PC-9 (cell line): ENCODE measurements at regions of chr9 and their contacts with region 1.

Region 1: DNA sequence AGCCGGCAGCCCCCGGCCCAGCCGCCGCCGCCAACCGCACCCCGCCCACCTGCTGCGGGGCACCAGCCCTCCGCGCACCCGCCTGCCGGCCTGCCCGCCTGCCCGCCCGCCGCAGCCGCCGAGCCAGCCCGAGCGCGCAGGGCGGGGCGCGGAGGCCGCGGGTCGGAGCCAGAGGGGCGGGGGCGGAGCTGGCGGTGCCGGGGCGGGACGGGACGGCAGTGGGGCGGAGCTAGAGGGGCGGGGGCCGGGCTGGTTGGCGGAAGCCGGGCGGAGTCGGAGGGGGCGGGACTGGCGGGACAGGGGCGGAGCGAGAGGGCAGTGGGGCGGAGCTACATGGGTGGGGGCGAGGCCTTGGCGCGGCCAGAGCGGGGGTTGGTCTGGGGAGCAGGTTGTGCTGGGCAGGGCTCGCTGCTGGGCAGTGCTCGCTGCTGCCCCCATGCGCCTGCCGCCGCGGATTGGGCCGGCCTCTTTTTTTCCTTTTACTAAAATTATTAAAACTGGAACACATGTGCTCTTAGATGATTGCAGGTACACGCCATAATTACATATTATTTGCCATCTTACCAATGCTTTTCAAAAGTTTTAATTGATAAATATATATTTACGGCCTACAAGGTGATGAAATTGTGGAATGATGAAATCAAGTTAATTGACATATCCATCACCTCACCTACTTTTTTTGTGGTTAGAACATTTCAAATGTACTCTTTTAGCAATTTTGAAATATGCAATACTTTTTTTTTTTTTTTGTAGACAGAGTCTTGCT is at the start of gene SH3GLB2:
- DNase-seq: peak; percentile 73 to 98
- H3K4me3 ChIP-seq: peak within 1 kb of the TSS; percentile 63
- H3K27ac ChIP-seq: peak within 1 kb of the TSS; percentile 48
- H3K4me1 ChIP-seq: peaks cover 47% of the 10 kb centered on the region
- H3K27me3 ChIP-seq: no peaks in the 10 kb centered on the region
- CTCF ChIP-seq: peak; percentile 86
- total RNA-seq, gene SH3GLB2: 184 and 213 TPM in 2 replicates

Region 2: GRCh38 chr9:128688512-128689292 is 339.7 kb before region 1 on chr9 and contains the start of gene SET:
- CTCF ChIA-PET with region 1: no interaction called
- POLR2A ChIA-PET with region 1: interaction called, 4 read pairs
- intact Hi-C with region 1: loop called (anchors 10 kb)
- DNase-seq: peak; percentile 71 to 98
- H3K4me3 ChIP-seq: peak within 1 kb of the TSS; percentile 80
- H3K27ac ChIP-seq: peak within 1 kb of the TSS; percentile 78
- H3K4me1 ChIP-seq: peaks cover 47% of the 10 kb centered on the region
- H3K27me3 ChIP-seq: no peaks in the 10 kb centered on the region
- CTCF ChIP-seq: no peak
- total RNA-seq, gene SET: 539 and 738 TPM in 2 replicates

Region 3: DNA sequence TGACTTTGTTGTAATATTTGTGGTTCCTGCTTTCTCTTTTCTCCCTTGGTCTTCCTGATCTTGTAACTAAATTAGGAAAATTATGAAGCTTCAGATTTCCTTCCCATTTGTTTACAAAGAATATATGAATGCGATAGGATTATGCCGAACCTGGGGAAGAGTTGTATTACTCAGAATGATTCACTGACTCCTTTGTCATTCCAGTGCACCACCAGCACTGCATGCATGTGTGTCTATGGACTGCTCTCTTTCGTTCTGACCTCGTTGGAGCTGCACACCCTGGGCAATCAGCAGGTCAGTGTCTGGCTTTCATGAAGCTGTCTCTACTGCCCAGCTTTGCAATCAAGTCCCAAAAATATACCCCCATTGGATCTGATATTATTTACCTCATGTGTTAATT is 55.4 kb before region 1 on chr9:
- CTCF ChIA-PET with region 1: no interaction called
- POLR2A ChIA-PET with region 1: interaction called, 13 read pairs
- intact Hi-C with region 1: no loop called
- DNase-seq: peak in 1 of 2 experiments; percentile 8
- H3K4me3 ChIP-seq: no peak overlapping the region
- H3K27ac ChIP-seq: 0 out of 2 replicates have a peak overlapping the region, but pooled peaks have one; percentile 18
- H3K4me1 ChIP-seq: no peaks in the 10 kb centered on the region
- H3K27me3 ChIP-seq: no peaks in the 10 kb centered on the region
- CTCF ChIP-seq: no peak

Region 4: DNA sequence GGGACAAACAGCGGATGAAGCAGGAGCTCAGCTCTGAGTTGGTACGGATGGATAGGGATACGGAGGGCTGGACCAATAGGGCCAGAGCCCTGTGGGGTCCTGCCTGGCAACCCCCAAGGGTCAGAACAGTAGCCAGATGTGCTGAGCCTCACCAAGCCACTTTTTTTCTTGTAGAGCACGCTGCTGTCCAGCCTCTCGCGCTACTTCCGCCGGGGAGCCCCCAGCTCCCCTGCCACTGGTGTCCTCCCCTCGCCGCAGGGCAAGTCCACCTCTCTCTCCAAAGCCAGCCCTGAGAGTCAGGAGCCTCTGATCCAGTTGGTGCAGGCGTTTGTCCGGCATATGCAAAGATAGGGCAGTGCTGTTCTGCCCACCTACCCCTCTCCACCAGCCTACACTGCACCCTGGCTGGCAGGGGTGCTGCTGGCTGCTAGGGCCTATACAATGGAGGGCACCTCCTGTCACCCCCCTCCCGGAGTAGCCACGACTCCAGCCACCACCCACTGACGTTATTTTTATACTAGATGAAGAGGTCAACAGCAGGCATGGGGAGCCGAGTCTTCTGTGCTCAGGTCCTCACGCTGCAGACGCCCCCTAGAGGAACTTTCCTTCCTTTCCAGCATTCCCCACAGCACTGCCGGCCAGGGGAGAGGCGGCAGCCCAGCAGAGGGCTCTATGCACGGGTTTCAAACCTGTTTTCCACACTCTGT is 21.9 kb before region 1 on chr9:
- CTCF ChIA-PET with region 1: interaction called, 8 read pairs
- POLR2A ChIA-PET with region 1: no interaction called
- intact Hi-C with region 1: loop called (anchors 1 kb)
- DNase-seq: peak; percentile 58 to 77
- H3K4me3 ChIP-seq: no peak overlapping the region
- H3K27ac ChIP-seq: no peak overlapping the region
- H3K4me1 ChIP-seq: no peaks in the 10 kb centered on the region
- H3K27me3 ChIP-seq: no peaks in the 10 kb centered on the region
- CTCF ChIP-seq: peak; percentile 85

Region 5: DNA sequence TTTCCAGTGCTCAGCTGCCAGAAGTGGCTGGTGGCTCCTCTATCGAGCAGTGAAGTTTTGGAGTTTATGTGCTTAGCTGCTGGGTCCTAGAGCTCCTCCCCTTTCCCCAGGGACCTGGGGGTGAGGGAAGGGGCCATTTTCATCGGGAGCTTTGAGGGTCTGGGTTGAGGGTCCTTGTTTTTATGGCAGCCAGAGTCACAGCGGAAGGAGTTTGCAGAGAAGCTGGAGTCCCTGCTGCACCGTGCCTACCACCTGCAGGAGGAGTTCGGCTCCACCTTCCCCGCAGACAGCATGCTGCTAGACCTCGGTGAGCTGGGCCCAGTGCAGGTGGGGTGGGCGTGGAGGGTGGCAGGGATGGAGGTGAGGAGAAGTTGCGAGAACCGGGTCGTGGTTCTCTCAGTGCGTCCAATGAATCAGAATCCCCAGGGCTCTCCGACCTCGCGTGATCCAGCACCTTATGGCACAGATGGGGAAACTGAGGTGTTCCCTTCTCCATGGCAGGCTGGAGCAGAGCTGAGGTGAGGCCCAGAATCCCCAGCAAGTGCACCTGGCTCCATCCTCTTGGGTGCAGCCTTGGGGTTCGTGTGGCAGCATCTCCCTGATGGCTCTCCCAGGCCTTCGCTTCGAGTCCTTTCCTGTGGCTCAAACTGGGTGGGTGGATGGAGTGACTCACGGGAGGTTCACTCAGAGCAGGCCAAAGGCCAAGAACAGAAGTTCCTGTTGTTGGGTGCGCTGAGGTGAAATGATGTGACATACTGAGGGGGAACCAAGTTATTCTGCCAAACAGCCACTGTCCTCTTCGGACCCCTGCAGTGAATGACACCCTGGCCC is 30.8 kb after region 1 on chr9:
- CTCF ChIA-PET with region 1: no interaction called
- POLR2A ChIA-PET with region 1: no interaction called
- intact Hi-C with region 1: loop called (anchors 1 kb)
- DNase-seq: peak; percentile 51 to 76
- H3K4me3 ChIP-seq: no peak overlapping the region
- H3K27ac ChIP-seq: peak overlapping the region; percentile 43
- H3K4me1 ChIP-seq: peaks cover 33% of the 10 kb centered on the region
- H3K27me3 ChIP-seq: no peaks in the 10 kb centered on the region
- CTCF ChIP-seq: no peak

Region 6: DNA sequence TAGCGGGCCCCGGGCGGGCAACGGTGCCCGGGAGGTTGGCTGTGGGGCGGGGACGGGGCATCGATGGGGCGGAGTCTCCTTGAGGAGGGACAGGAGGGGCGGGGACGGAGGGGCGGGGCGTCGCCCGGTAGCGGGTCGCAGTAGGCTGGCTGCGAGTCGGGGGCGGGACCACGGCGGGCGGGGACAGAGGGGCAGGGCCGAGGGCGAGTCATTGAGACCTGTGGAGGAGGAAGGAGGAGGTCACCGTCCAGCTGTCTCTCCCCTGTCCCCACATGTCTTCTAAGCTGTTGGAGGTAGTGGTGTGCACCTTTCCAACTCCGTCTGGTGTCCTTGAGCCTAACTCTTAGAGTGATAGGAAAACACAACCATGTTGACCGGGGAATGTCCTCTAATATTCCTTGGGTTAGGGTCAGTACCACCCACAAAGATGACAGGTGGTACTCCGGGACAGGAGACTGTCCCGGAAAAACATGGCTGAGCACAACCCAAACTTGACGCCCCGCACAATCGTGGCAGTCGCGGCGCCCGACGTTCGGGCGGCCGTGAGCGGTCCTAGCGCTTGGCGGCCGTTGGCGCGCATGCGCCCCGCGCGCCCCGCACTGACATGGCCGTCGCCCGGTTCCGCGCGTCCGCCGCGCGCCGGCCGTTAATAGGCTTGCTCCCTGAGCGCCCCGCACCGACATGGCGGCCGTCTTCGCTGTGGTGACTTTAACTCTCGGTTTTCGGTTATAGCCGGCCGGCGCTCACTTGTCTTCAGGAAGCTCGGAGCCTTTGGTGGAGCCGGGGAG is 82.6 kb after region 1 on chr9 and contains the starts of genes CRAT and PTPA:
- CTCF ChIA-PET with region 1: no interaction called
- POLR2A ChIA-PET with region 1: interaction called, 3 read pairs
- intact Hi-C with region 1: loop called (anchors 2 kb)
- DNase-seq: peak; percentile 78 to 96
- H3K4me3 ChIP-seq: peak within 1 kb of the TSS; percentile 93
- H3K27ac ChIP-seq: peak within 1 kb of the TSS; percentile 74
- H3K4me1 ChIP-seq: peaks cover 24% of the 10 kb centered on the region; the same call in 1 of the 2 replicates
- H3K27me3 ChIP-seq: no peaks in the 10 kb centered on the region
- CTCF ChIP-seq: no peak
- total RNA-seq, gene CRAT: 40.3 and 60.0 TPM in 2 replicates
- total RNA-seq, gene PTPA: 182 and 197 TPM in 2 replicates